ENCODE measurements at regions of chr18 and their contacts with region 1.

Region 1: GRCh38 chr18:58529714-58530354 is 99.1 kb downstream of the ALPK2 start:
- DNase-seq: no peak
- ATAC-seq: peak; percentile 55
- H3K4me3 ChIP-seq: no peak overlapping the region
- H3K27ac ChIP-seq: peak overlapping the region; percentile 20; the same call in 1 of the 2 replicates
- H3K4me1 ChIP-seq: peaks cover 30% of the 10 kb centered on the region
- H3K27me3 ChIP-seq: no peaks in the 10 kb centered on the region
- CTCF ChIP-seq: peak; percentile 83 to 97 (median 96)
- EP300 ChIP-seq: no peak
- POLR2A ChIP-seq: no peak
- RAD21 ChIP-seq: peak; percentile 98

Region 2: GRCh38 chr18:58241877-58242276 is 288.0 kb before region 1 on chr18:
- CTCF ChIA-PET with region 1: no interaction called
- POLR2A ChIA-PET with region 1: no interaction called
- RAD21 ChIA-PET with region 1: no interaction called
- SMC1A ChIA-PET with region 1: no interaction called
- in situ Hi-C with region 1: no loop called
- intact Hi-C with region 1: no loop called
- DNase-seq: no peak
- ATAC-seq: no peak; the same call in 2 of the 3 replicates
- H3K4me3 ChIP-seq: no peak overlapping the region
- H3K27ac ChIP-seq: no peak overlapping the region
- H3K4me1 ChIP-seq: no peaks in the 10 kb centered on the region
- H3K27me3 ChIP-seq: no peaks in the 10 kb centered on the region
- CTCF ChIP-seq: no peak
- EP300 ChIP-seq: no peak
- POLR2A ChIP-seq: no peak
- RAD21 ChIP-seq: no peak

Region 3: GRCh38 chr18:58493516-58494253 is 36.1 kb before region 1 on chr18:
- CTCF ChIA-PET with region 1: interaction called, 33 read pairs
- POLR2A ChIA-PET with region 1: no interaction called
- RAD21 ChIA-PET with region 1: interaction called, 57 read pairs
- SMC1A ChIA-PET with region 1: interaction called, 66 read pairs
- in situ Hi-C with region 1: no loop called
- intact Hi-C with region 1: no loop called
- DNase-seq: peak; percentile 28
- ATAC-seq: peak; percentile 94
- H3K4me3 ChIP-seq: no peak overlapping the region
- H3K27ac ChIP-seq: no peak overlapping the region
- H3K4me1 ChIP-seq: peaks cover 13% of the 10 kb centered on the region
- H3K27me3 ChIP-seq: no peaks in the 10 kb centered on the region
- CTCF ChIP-seq: peak; percentile 75 to 90 (median 85)
- EP300 ChIP-seq: no peak
- POLR2A ChIP-seq: no peak
- RAD21 ChIP-seq: peak; percentile 81

Region 4: GRCh38 chr18:58552057-58552461 is 22.2 kb after region 1 on chr18:
- CTCF ChIA-PET with region 1: interaction called, 10 read pairs
- POLR2A ChIA-PET with region 1: interaction called, 6 read pairs
- RAD21 ChIA-PET with region 1: interaction called, 33 read pairs
- SMC1A ChIA-PET with region 1: interaction called, 578 read pairs
- in situ Hi-C with region 1: no loop called
- intact Hi-C with region 1: no loop called
- DNase-seq: peak; percentile 82
- ATAC-seq: peak; percentile 78
- H3K4me3 ChIP-seq: no peak overlapping the region
- H3K27ac ChIP-seq: peak overlapping the region; percentile 80
- H3K4me1 ChIP-seq: peaks cover 37% of the 10 kb centered on the region
- H3K27me3 ChIP-seq: no peaks in the 10 kb centered on the region
- CTCF ChIP-seq: no peak
- EP300 ChIP-seq: peak; percentile 97
- POLR2A ChIP-seq: no peak
- RAD21 ChIP-seq: peak; percentile 25; the same call in 1 of the 2 replicates

Region 5: GRCh38 chr18:58661423-58661822 is 131.6 kb after region 1 on chr18:
- CTCF ChIA-PET with region 1: interaction called, 58 read pairs
- POLR2A ChIA-PET with region 1: interaction called, 22 read pairs
- RAD21 ChIA-PET with region 1: interaction called, 171 read pairs
- SMC1A ChIA-PET with region 1: interaction called, 682 read pairs
- in situ Hi-C with region 1: loop called (anchors 5 kb)
- intact Hi-C with region 1: loop called (anchors 1 kb)
- DNase-seq: no peak
- ATAC-seq: no peak
- H3K4me3 ChIP-seq: peak overlapping the region; percentile 28; the same call in 1 of the 2 replicates
- H3K27ac ChIP-seq: peak overlapping the region; percentile 45; the same call in 1 of the 2 replicates
- H3K4me1 ChIP-seq: peaks cover 36% of the 10 kb centered on the region
- H3K27me3 ChIP-seq: no peaks in the 10 kb centered on the region
- CTCF ChIP-seq: peak; percentile 4 to 36 (median 20); a peak in 4 of 6 replicates
- EP300 ChIP-seq: no peak
- POLR2A ChIP-seq: no peak
- RAD21 ChIP-seq: peak; percentile 25; the same call in 1 of the 2 replicates

Region 6: DNA sequence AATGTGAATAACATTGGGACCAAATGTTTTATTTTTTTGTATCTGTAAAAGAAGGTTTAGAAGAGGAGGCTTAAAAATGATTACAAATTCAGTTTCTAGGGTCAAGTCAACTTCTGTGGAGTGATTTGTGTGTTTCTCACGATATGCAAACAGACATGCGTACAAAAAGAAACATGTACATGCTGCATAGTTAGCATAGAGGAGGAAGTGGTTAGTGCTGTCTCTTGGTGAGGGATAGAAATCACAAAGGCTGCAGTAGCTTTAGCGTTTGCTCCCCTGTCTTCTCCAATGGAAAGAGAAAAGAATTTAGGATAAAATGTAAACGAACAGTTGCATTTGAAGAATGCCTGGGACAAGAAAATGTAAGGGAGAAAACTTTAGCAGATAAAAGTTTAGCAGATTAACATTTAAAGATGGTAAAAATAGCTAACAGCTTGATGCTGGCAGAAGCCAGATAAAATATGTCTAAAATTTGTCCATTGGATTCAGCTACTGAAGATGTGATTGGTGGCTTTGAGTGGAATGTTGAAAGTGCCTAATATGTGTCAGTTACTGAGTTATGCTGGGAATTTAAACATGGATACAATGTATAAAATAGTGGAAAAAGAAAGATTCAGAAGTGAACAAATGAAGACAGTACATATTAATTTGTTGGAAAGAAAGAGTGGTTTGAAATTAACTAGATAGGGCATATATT is 186.4 kb after region 1 on chr18:
- CTCF ChIA-PET with region 1: interaction called, 10 read pairs
- POLR2A ChIA-PET with region 1: no interaction called
- RAD21 ChIA-PET with region 1: interaction called, 6 read pairs
- SMC1A ChIA-PET with region 1: interaction called, 5 read pairs
- in situ Hi-C with region 1: no loop called
- intact Hi-C with region 1: no loop called
- DNase-seq: no peak
- ATAC-seq: peak; percentile 78
- H3K4me3 ChIP-seq: no peak overlapping the region
- H3K27ac ChIP-seq: peak overlapping the region; percentile 41; the same call in 1 of the 2 replicates
- H3K4me1 ChIP-seq: peaks cover 9% of the 10 kb centered on the region; the same call in 1 of the 2 replicates
- H3K27me3 ChIP-seq: no peaks in the 10 kb centered on the region
- CTCF ChIP-seq: no peak
- EP300 ChIP-seq: no peak
- POLR2A ChIP-seq: no peak
- RAD21 ChIP-seq: no peak

Region 7: DNA sequence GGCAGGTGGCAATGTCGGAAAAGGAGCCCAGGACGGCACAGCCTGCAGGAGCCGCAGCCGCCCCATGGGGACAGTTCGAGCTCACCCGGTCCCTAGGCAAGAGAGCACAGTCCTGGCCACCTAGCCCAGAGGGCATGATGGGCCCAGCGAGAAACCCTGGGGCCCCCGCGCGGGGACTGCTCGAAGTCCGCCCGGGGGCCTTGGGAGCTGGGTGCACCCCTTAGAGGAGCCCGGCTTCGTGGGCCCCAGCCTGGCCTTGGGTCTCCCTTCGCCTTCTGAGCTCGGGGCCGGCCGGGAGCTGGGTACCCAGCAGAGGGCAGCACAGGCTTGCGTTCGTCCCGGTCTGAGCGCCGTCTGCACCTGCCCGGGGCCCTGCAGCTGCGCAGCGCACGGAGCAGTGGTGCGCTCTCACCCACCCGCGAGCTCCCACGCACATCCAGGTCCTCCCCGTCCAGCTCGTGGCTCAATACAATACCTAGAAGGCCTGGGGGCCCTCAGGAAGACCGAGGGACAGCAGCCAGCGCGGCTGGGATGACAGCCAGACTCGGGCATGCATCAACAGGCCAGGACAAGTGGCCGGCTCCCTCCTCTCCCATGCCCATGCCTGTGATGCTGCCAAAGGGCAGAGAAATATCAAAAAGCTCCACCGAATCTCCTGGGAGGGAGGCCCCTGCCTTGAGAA is 238.6 kb after region 1 on chr18:
- CTCF ChIA-PET with region 1: interaction called, 743 read pairs
- POLR2A ChIA-PET with region 1: interaction called, 25 read pairs
- RAD21 ChIA-PET with region 1: interaction called, 522 read pairs
- SMC1A ChIA-PET with region 1: interaction called, 629 read pairs
- in situ Hi-C with region 1: loop called (anchors 5 kb)
- intact Hi-C with region 1: loop called (anchors 1 kb)
- DNase-seq: no peak
- ATAC-seq: peak; percentile 98
- H3K4me3 ChIP-seq: no peak overlapping the region
- H3K27ac ChIP-seq: no peak overlapping the region
- H3K4me1 ChIP-seq: peaks cover 6% of the 10 kb centered on the region; the same call in 1 of the 2 replicates
- H3K27me3 ChIP-seq: no peaks in the 10 kb centered on the region; a peak in 2 of 4 replicates
- CTCF ChIP-seq: peak; percentile 80 to 93 (median 90)
- EP300 ChIP-seq: no peak
- POLR2A ChIP-seq: no peak
- RAD21 ChIP-seq: peak; percentile 81

Region 8: DNA sequence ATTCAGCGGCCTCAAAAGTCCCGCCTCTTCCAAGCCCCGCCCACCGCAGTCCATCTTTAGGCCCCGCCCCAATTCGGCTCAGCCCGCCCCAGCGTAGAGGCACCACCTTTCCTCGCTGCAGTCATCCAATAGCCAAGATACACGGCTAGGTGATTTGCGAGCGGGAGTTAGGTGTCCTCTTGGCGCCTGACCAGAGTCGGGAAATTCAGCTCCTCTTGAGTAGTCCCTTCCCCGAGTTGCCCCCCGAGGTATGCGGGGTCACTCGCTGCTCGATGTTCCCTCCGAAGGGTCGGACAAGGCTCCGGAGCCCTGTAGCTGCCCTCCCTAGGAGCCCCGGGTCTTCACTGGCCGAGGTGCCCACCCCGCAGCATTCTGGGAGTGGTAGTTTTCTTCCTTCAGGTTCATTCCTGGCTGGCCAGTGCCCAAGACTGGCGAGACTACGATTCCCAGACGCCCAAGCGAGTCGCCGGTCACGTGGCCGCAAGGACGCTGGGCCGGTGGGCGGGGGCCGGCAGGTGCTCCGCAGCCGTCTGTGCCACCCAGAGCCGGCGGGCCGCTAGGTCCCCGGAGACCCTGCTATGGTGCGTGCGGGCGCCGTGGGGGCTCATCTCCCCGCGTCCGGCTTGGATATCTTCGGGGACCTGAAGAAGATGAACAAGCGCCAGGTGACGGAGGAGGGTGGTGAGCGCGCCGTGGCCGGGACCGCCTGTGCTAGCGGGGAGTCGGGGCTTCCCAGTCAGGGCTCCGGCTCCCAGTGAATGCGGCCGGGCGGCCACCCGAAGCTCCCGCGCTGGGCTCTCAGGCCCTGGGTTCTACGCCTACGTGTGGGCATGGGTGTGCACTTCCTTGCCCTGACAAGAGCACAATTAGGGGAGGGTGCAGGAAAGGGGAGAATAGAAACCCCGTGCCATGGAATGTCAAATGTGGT is 609.8 kb after region 1 on chr18 and contains the start of gene SEC11C:
- CTCF ChIA-PET with region 1: no interaction called
- POLR2A ChIA-PET with region 1: no interaction called
- RAD21 ChIA-PET with region 1: interaction called, 3 read pairs
- SMC1A ChIA-PET with region 1: interaction called, 4 read pairs
- in situ Hi-C with region 1: no loop called
- intact Hi-C with region 1: loop called (anchors 10 kb)
- DNase-seq: peak; percentile 93
- ATAC-seq: peak; percentile 85
- H3K4me3 ChIP-seq: peak within 1 kb of the TSS; percentile 93
- H3K27ac ChIP-seq: peak within 1 kb of the TSS; percentile 98
- H3K4me1 ChIP-seq: peaks cover 8% of the 10 kb centered on the region; the same call in 1 of the 2 replicates
- H3K27me3 ChIP-seq: 0 out of 4 replicates have a peak, but pooled peaks cover 0 to 4% of the 10 kb centered on the region in 2 experiments
- CTCF ChIP-seq: no peak
- EP300 ChIP-seq: no peak
- POLR2A ChIP-seq: peak; percentile 93
- RAD21 ChIP-seq: no peak
- polyA plus RNA-seq, gene SEC11C: 213 to 304 TPM

Measured in GM12878 (cell line).